ENCODE measurements at regions of chr7 and their contacts with region 1.

Region 1: GRCh38 chr7:143416565-143417149 is 8.0 kb upstream of the EPHA1 start:
- DNase-seq: no peak

Region 2: DNA sequence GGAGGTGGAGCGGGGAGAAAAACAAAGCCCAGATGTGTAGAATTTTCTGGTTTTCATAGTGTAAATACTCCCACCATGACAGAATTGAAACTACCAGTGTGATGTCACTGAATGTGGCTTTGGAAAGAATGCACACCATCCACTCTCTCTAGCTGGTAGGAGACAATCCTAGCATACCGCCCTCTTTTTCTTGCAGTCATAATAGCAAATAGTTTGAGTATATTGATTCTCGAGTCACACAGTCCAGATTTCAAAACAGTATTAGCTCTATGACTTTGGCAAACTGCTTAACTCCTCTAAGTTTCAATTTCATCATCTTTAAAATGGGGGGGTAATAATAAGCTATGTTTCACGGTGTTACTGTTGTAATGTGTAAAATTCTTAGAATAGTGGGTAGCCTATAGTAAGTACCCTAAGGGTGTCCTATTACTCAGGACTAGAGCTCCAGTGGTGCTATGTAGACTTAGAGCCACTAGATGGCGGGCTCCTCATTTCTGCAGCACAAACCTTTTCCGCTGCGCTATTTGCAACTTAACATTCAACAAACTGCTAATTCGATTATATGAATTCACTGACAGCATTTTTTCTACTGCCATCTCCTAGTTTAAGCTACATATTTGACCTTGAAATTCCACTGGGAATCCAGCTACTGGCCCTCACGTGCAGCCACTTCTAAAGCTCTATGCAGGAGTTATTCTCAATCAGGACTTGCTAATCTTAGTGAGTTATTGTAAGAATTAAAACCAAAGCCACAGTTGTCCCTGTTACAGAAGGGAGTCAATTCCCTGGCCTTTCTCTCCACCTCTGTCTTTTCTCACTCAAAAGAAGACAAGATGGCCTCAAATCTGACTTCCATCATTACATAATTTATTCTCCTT is 176.1 kb before region 1 on chr7:
- intact Hi-C with region 1: loop called (anchors 2 kb)
- DNase-seq: no peak

Region 3: DNA sequence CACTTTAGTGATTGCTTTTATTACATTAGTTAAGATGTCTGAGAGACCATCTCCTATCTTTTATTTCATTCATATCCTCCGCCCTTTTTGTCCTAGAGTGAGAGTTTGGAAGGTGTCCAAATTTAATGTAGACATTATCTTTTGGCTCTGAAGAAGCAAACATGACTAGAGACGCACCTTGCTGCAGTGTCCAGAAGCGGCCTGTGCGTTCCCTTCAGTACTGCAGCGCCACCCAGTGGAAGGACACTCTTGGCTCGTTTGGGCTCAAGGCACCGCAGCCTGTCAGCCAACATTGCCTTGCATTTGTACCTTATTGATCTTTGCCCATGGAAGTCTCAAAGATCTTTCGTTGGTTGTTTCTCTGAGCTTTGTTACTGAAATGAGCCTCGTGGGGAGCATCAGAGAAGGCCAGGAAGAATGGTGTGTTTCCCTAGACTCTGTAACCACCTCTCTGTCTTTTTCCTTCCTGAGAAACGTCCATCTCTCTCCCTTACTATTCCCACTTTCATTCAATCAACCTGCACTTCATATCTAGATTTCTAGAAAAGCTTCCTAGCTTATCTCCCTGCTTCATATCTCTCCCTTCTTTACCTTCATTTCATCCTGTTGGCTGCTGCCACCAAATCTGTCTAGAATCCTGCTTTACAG is 111.1 kb before region 1 on chr7:
- intact Hi-C with region 1: loop called (anchors 5 kb)
- DNase-seq: peak; percentile 86

Measured in cardiac septum (tissue), 1 donor.